Activated B cell treated with CpG ODN at 0.5 μM for 24 hours (primary cell): ENCODE measurements at regions of chr13 and their contacts with region 1.

Region 1: GRCh38 chr13:33256148-33256840 is 29.3 kb downstream of the STARD13 start:
- DNase-seq: no peak
- ATAC-seq: no peak
- H3K4me3 Mint-ChIP-seq: no peak overlapping the region
- H3K27ac Mint-ChIP-seq: no peak overlapping the region
- H3K4me1 Mint-ChIP-seq: peaks cover under 1% of the 10 kb centered on the region
- H3K27me3 Mint-ChIP-seq: peaks cover 4% of the 10 kb centered on the region
- CTCF ChIP-seq: no peak

Region 2: DNA sequence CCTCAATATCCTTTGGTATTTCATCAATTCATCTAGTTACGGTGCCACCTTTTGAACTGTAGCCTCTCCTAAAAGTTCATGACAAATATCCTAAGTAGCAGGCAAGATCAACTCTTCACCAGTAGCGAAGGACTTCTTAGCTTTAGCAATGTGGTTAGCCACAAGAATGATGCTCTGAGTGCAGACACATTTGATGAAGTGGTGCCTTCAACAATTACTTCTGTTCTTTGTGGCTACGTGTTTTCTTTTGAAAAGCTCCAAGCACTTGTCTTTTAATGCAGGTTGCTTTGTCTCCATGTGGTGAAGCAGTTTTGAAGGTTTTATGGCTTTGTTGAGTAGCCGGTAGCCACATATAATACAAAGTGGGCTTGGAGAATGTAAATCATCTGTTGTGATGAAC is 1861.8 kb before region 1 on chr13:
- CTCF ChIA-PET with region 1: no interaction called
- POLR2A ChIA-PET with region 1: interaction called, 12 read pairs
- intact Hi-C with region 1: no loop called
- DNase-seq: no peak
- ATAC-seq: no peak
- H3K4me3 Mint-ChIP-seq: no peak overlapping the region
- H3K27ac Mint-ChIP-seq: no peak overlapping the region
- H3K4me1 Mint-ChIP-seq: no peaks in the 10 kb centered on the region
- H3K27me3 Mint-ChIP-seq: no peaks in the 10 kb centered on the region
- CTCF ChIP-seq: no peak

Region 3: GRCh38 chr13:32446773-32447465 is 809.4 kb before region 1 on chr13:
- CTCF ChIA-PET with region 1: no interaction called
- POLR2A ChIA-PET with region 1: no interaction called
- intact Hi-C with region 1: no loop called
- DNase-seq: no peak
- ATAC-seq: no peak
- H3K4me3 Mint-ChIP-seq: no peak overlapping the region
- H3K27ac Mint-ChIP-seq: no peak overlapping the region
- H3K4me1 Mint-ChIP-seq: peaks cover 21% of the 10 kb centered on the region
- H3K27me3 Mint-ChIP-seq: no peaks in the 10 kb centered on the region
- CTCF ChIP-seq: no peak